ENCODE measurements at regions of chr1 and their contacts with region 1.

Region 1: GRCh38 chr1:201154389-201155165 is at the start of gene TMEM9:
- DNase-seq: peak; percentile 100
- H3K27ac ChIP-seq: peak within 1 kb of the TSS; percentile 69
- CTCF ChIP-seq: no peak

Region 2: DNA sequence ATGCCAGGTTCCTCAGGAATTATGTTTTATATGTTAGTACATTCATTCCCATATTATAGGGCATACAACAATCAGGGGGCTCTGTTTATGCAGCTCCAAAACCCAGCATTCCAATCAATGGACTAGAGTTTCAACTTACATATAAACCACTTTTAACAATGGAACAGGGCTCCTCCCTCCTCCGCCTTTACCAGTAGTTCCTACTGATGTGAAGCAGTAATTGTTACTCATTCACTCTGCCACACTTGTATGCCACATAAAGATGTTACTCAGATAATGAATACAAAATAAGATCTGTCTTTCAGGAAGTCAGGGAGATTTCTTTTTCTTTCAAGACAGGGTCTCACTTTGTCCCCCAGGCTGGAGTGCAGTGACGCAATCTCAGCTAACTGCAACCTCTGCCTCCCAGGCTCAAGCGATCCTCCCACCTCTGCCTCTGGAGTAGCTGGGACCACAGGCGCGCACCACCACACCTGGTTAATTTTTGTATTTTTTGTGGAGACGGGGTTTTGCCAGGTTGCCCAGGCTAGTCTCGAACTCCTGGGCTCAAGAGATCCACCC is 761.9 kb before region 1 on chr1:
- CTCF ChIA-PET with region 1: no interaction called
- POLR2A ChIA-PET with region 1: interaction called, 10 read pairs
- DNase-seq: no peak
- H3K27ac ChIP-seq: 0 out of 2 replicates have a peak overlapping the region, but pooled peaks have one; percentile 22
- CTCF ChIP-seq: no peak

Region 3: DNA sequence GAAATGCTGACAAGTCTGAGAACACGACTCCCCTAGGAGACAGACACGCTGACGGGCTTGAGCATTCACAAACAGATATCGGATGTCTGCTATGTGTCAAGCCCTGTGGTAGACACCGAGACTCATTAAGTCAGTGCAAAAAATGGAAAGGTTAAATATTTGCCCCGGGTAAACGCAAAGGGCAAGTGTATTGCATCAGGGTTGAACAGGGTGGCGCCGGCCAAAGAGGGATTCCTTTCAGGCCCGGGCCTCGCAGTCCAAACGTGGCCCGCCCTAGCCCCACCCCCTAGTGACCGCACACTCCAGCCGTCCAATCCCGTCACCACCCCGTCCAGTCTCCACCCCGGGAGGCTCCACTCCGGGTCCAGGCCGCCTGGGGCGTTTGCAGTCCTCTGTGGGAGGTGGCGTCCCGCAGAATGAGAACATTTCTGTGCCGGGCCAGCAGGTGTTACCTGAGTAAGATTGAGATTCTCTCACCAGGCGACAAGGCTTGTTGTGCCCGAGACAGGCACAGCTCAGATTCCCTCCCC is 16.0 kb after region 1 on chr1:
- CTCF ChIA-PET with region 1: interaction called, 14 read pairs
- POLR2A ChIA-PET with region 1: no interaction called
- DNase-seq: peak; percentile 99
- H3K27ac ChIP-seq: peak overlapping the region; percentile 75
- CTCF ChIP-seq: no peak

Measured in RWPE1 (cell line).